Heart left ventricle (tissue), 16 donors: ENCODE measurements at regions of chr5 and their contacts with region 1.

Region 1: GRCh38 chr5:138352071-138352721 is at the start of gene KDM3B:
- DNase-seq: peak; percentile 80 to 94 (median 83)
- ATAC-seq: peak; percentile 56 to 91 (median 82)
- H3K4me3 ChIP-seq: peak within 1 kb of the TSS; percentile 67 to 99 (median 96)
- H3K27ac ChIP-seq: peak within 1 kb of the TSS; percentile 92 to 99 (median 97)
- H3K4me1 ChIP-seq: peaks cover 0 to 64% (median 35%) of the 10 kb centered on the region in 12 donors
- H3K27me3 ChIP-seq: no peaks in the 10 kb centered on the region
- CTCF ChIP-seq: peak; percentile 83 to 99 (median 96)
- POLR2A ChIP-seq: peak in 1 of 2 donors; percentile 26
- total RNA-seq, gene KDM3B: 31.9 to 65.1 (median 52.6) TPM

Region 2: DNA sequence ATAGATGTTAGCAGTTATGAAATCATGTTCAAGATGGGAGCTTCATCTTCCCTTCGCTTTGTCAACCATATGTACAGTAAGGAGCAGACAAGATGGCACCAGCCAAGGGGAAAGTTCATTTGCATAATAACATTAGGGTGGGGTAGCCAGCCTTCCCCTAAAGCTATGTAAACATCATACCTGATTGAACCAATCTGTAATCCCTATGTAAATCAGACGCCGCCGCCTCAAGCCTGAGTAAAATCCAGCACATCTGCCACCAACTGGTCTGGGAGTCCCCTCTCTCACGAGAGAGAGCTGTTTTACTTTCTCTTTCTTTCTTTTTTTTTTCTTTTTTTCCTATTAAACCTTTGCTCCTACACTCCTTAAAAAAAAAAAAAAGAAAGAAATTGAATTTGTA is 55.8 kb after region 1 on chr5:
- intact Hi-C with region 1: loop called in 2 of 10 experiments (anchors 2 to 10 kb)
- DNase-seq: no peak
- ATAC-seq: no peak
- H3K4me3 ChIP-seq: no peak overlapping the region
- H3K27ac ChIP-seq: no peak overlapping the region
- H3K4me1 ChIP-seq: no peaks in the 10 kb centered on the region
- H3K27me3 ChIP-seq: no peaks in the 10 kb centered on the region
- CTCF ChIP-seq: no peak
- POLR2A ChIP-seq: no peak

Region 3: DNA sequence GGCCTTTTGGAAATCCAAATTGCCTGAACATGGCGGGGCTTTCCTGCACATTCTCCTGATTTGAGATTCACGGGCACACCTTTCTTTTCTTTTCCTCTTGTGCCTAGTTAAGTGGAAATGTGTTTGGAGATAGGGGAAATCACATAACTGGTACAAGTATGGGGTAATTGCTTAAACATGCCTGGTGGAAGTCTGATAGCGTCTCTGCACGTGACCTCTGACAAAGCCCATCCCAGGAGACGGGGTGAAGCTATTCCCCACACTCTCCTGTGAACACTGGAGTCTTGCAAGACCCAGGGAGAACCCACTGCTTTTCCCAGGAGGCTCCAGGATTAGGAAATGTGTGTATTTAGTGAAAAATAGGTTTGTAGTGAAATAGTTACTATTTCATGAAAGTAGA is 83.7 kb after region 1 on chr5:
- intact Hi-C with region 1: no loop called
- DNase-seq: no peak
- ATAC-seq: no peak
- H3K4me3 ChIP-seq: no peak overlapping the region
- H3K27ac ChIP-seq: peak overlapping the region in 2 of 12 donors; percentile 18 to 35
- H3K4me1 ChIP-seq: peaks cover 0 to 28% (median 17%) of the 10 kb centered on the region in 12 donors
- H3K27me3 ChIP-seq: no peaks in the 10 kb centered on the region
- CTCF ChIP-seq: no peak
- POLR2A ChIP-seq: no peak